AG04449 (cell line): ENCODE measurements at regions of chr17 and their contacts with region 1.

Region 1: DNA sequence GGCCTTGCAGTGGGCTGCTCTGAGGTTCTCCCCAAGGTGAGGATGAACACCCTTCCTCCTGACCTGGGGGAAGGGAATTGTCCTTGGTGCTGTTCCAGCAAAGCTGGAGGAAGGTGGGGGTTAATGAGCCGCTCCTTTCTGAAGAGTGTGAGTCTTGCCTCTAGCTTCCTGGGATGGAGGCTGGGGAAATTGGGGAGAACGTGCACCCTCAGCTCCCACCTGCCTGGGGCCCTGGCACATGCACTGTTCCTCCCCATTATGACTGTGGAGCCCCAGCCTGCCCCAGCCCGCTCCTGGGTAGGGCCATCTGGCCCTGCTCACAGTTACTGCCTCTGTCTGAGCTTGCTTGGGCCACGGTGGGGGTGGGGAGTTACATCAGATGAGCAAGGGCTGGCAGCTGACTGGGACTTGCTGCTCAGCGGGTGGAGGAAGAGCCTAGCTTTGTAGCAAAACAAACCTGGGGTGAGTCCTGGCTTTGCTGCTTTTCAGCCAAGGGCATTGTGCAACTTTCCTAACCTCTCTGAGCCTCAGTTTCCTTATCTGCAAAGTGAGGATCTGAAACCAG is 11.1 kb downstream of the TNS4 start:
- DNase-seq: no peak
- H3K4me3 ChIP-seq: no peak overlapping the region
- CTCF ChIP-seq: no peak

Region 2: GRCh38 chr17:39927101-39927928 is 563.1 kb before region 1 on chr17 and contains the starts of genes LRRC3C and ORMDL3:
- CTCF ChIA-PET with region 1: no interaction called
- POLR2A ChIA-PET with region 1: no interaction called
- DNase-seq: peak; percentile 41
- H3K4me3 ChIP-seq: peak within 1 kb of the TSS; percentile 82
- CTCF ChIP-seq: no peak

Region 3: DNA sequence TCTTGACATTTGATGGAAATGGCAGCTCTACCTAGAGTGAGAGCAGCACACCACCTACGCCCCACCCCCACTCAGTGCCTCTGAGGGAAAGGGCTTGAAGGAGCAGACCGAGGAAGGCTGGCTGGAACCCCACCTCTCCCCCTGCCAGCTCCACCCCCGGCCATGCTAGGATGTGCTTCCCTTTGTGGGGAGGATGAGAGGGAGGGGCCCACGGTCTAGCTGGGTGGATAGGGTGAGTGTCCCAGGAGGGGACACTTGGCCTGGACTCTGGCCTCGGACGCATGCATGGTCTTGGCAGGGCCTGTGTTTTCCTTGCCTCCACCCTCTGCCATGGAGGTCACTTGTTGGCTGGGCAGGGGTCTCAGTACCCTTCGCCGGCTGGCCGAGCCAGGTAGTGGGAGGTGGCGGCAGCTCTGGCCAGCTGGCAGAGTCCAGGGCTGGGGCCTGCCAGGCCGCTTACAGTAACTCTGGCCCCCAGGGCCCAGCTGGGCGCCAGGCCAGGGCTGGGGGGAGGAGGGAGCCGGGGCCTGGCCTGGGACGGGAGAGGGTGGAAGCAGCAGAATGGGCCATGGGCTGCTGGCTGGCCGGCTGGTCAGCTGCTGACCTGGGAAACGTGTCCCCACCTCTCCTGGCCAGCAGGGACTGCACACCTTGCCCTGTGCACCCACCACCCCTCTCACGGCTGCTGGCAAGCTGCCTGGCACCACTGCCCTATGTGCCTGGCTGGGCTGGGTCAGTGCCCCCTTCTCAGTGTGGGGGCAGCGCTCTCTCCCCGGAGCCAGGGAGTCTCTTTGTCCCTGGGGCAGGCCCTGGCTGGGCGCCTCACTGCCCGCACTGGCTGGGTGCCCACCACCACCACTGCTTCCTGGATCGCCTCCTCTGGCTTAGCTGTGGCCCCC is 158.4 kb before region 1 on chr17:
- CTCF ChIA-PET with region 1: no interaction called
- POLR2A ChIA-PET with region 1: no interaction called
- DNase-seq: no peak
- H3K4me3 ChIP-seq: no peak overlapping the region
- CTCF ChIP-seq: no peak

Region 4: GRCh38 chr17:40407460-40407859 is 82.9 kb before region 1 on chr17:
- CTCF ChIA-PET with region 1: no interaction called
- POLR2A ChIA-PET with region 1: no interaction called
- DNase-seq: no peak
- H3K4me3 ChIP-seq: no peak overlapping the region
- CTCF ChIP-seq: no peak

Region 5: DNA sequence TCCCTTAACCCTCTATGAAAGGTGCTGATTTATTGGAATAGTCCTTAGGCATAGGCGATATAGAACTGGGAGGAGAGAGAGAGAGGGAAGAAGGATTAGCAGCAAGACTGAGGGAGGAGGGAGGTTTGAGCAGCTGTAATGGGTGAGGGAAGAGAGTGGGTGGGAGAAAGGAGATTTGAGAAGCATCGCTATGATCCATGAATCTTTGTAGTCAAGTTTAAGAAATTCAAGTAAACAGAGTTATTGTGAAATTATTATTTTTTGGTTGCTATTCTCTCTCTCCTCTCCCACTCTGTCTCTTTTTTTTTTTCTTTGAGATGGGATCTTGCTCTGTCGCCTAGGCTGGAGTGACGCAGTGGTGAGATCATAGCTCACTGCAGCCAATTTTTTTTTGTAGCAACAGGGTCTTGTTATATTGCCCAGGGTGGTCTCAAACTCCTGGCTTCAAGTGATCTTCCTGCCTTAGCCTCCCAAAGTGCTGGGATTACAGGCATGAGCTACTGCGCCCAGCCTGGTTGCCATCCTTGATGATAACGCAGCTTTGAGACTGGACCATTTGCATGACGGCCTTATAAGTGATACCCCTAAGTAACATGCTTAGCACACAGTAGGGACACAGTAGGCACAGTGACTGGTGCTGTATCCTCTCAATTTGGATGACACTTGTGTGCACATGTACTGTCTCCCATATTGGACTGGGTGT is 32.0 kb after region 1 on chr17:
- CTCF ChIA-PET with region 1: interaction called, 3 read pairs
- POLR2A ChIA-PET with region 1: interaction called, 13 read pairs
- DNase-seq: no peak
- H3K4me3 ChIP-seq: no peak overlapping the region
- CTCF ChIP-seq: no peak

Region 6: GRCh38 chr17:40551879-40552768 is 61.8 kb after region 1 on chr17:
- CTCF ChIA-PET with region 1: interaction called, 3 read pairs
- POLR2A ChIA-PET with region 1: interaction called, 14 read pairs
- DNase-seq: peak; percentile 99
- H3K4me3 ChIP-seq: no peak overlapping the region; the same call in 1 of the 2 replicates
- CTCF ChIP-seq: no peak

Region 7: GRCh38 chr17:40647624-40648383 is 157.4 kb after region 1 on chr17 and contains the start of gene SMARCE1:
- CTCF ChIA-PET with region 1: no interaction called
- POLR2A ChIA-PET with region 1: no interaction called
- DNase-seq: no peak
- H3K4me3 ChIP-seq: peak within 1 kb of the TSS; percentile 83
- CTCF ChIP-seq: no peak